ENCODE measurements at regions of chr19 and their contacts with region 1.

Region 1: DNA sequence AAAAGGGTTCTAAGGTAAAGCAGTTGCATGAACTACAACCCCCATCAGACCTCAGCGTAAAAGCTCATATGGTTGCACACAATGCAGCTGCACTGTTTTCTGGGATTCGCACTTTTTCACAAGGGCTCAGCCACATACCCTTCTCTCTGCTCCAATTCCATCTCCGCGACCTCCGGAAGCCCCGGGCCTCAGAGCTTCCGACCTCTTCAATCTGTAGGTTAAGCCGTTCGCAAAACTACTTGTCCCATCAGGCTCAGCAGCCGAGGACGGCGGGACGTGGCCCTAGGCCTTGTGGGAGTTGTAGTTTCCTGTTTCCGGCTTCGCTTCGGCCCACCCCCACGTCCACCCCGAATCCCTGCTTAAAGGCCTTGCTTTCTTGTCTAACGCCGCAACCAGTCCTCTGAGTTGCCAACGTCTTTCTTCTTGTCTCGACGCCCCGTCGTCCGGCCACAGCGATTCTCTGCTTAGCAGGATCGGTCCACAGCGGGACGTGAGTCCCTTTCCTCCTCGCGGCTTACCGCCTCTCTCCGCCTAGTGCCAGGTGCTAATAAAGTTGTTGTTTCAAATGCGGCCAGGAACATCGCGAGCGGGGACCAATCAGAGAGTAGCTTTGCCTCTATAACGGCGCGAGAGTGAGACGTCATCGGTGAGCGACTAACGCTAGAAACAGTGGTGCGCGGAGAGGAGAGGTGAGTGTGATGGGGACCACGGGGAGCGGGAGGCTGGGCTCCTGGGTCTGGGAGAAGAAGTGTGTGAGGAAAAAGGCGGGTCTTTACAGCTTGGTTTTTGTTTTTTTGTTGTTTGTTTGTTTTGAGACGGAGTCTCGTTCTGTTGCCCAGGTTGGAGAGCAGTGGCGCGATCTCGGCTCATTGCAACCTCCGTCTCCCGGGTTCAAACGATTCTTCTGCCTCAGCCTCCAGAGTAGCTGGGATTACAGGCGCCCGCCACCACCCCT is at the starts of genes PRPF31 and TFPT:
- DNase-seq: peak; percentile 80 to 98 (median 97)
- ATAC-seq: peak; percentile 92
- H3K4me3 ChIP-seq: peak within 1 kb of the TSS; percentile 94
- H3K4me3 Mint-ChIP-seq: peak within 1 kb of the TSS; percentile 86 to 96 (median 94)
- H3K27ac ChIP-seq: peak within 1 kb of the TSS; percentile 88
- H3K27ac Mint-ChIP-seq: peak within 1 kb of the TSS; percentile 88 to 97 (median 94)
- H3K4me1 ChIP-seq: peaks cover 11 to 20% of the 10 kb centered on the region in 2 donors
- H3K4me1 Mint-ChIP-seq: peaks cover 23 to 48% (median 42%) of the 10 kb centered on the region in 7 donors
- H3K27me3 ChIP-seq: no peaks in the 10 kb centered on the region
- H3K27me3 Mint-ChIP-seq: peaks cover 0 to 2% (median 0%) of the 10 kb centered on the region in 5 donors
- total RNA-seq, gene PRPF31: 51.8 to 82.1 (median 71.0) TPM
- total RNA-seq, gene TFPT: 13.4 to 46.5 (median 14.6) TPM

Region 2: GRCh38 chr19:53958168-53958571 is 157.2 kb before region 1 on chr19:
- CTCF ChIA-PET with region 1: no interaction called
- POLR2A ChIA-PET with region 1: no interaction called
- intact Hi-C with region 1: no loop called
- DNase-seq: no peak
- ATAC-seq: no peak
- H3K4me3 ChIP-seq: no peak overlapping the region
- H3K4me3 Mint-ChIP-seq: peak overlapping the region in 1 of 10 donors; percentile 13
- H3K27ac ChIP-seq: no peak overlapping the region
- H3K27ac Mint-ChIP-seq: no peak overlapping the region
- H3K4me1 ChIP-seq: no peaks in the 10 kb centered on the region
- H3K4me1 Mint-ChIP-seq: peaks cover 0 to 15% (median 9%) of the 10 kb centered on the region in 7 donors
- H3K27me3 ChIP-seq: peaks cover 0 to 10% of the 10 kb centered on the region in 2 donors
- H3K27me3 Mint-ChIP-seq: peaks cover 55 to 83% (median 65%) of the 10 kb centered on the region in 5 donors

Region 3: DNA sequence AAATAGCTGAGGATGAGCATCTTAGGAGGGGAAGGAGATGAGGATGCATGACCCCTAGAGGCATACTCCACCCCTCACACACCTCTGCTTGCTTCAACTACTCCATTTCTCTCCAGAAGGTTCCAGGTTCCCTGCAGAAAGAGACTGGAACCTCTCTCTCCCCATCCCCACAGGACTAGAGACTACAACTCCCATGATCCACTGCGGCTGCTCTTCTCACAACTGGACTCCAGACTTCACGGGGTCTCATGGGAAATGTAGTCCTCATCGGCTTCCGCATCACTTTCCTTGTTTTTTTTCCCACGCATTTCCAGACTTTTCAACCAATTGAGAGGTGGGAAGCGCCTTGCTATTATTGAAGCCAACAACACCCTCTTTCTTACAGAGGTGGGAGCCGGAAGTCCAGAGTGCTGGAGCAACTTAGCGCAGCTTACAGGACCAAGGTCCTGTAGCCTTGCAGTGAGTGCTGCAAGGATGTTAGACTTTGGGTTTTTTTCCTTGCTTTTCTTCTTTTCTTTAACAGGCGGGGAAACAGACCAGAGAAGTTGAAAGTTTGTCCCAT is 137.9 kb before region 1 on chr19:
- CTCF ChIA-PET with region 1: no interaction called
- POLR2A ChIA-PET with region 1: no interaction called
- intact Hi-C with region 1: loop called (anchors 1 to 5 kb)
- DNase-seq: peak; percentile 34 to 69 (median 59)
- ATAC-seq: peak; percentile 83
- H3K4me3 ChIP-seq: peak overlapping the region; percentile 42
- H3K4me3 Mint-ChIP-seq: peak overlapping the region; percentile 73 to 90 (median 83)
- H3K27ac ChIP-seq: no peak overlapping the region
- H3K27ac Mint-ChIP-seq: peak overlapping the region in 2 of 9 donors; percentile 21 to 50
- H3K4me1 ChIP-seq: peaks cover 0 to 5% of the 10 kb centered on the region in 2 donors
- H3K4me1 Mint-ChIP-seq: peaks cover 14 to 41% (median 30%) of the 10 kb centered on the region in 7 donors
- H3K27me3 ChIP-seq: peaks cover 6 to 16% of the 10 kb centered on the region in 2 donors
- H3K27me3 Mint-ChIP-seq: peaks cover 48 to 70% (median 61%) of the 10 kb centered on the region in 5 donors

Region 4: GRCh38 chr19:54102421-54103169 is 12.8 kb before region 1 on chr19 and contains the start of gene NDUFA3:
- CTCF ChIA-PET with region 1: interaction called, 3 read pairs
- POLR2A ChIA-PET with region 1: interaction called, 41 read pairs
- intact Hi-C with region 1: loop called (anchors 1 kb)
- DNase-seq: peak; percentile 95 to 99 (median 97)
- ATAC-seq: peak; percentile 99
- H3K4me3 ChIP-seq: peak within 1 kb of the TSS; percentile 72
- H3K4me3 Mint-ChIP-seq: peak within 1 kb of the TSS; percentile 87 to 99 (median 98)
- H3K27ac ChIP-seq: peak within 1 kb of the TSS; percentile 77
- H3K27ac Mint-ChIP-seq: peak within 1 kb of the TSS; percentile 85 to 98 (median 94)
- H3K4me1 ChIP-seq: peaks cover 0 to 6% of the 10 kb centered on the region in 2 donors
- H3K4me1 Mint-ChIP-seq: peaks cover 5 to 40% (median 24%) of the 10 kb centered on the region in 7 donors
- H3K27me3 ChIP-seq: no peaks in the 10 kb centered on the region
- H3K27me3 Mint-ChIP-seq: peaks cover 0 to 6% (median 0%) of the 10 kb centered on the region in 5 donors
- total RNA-seq, gene NDUFA3: 64.4 to 127 (median 117) TPM

Region 5: DNA sequence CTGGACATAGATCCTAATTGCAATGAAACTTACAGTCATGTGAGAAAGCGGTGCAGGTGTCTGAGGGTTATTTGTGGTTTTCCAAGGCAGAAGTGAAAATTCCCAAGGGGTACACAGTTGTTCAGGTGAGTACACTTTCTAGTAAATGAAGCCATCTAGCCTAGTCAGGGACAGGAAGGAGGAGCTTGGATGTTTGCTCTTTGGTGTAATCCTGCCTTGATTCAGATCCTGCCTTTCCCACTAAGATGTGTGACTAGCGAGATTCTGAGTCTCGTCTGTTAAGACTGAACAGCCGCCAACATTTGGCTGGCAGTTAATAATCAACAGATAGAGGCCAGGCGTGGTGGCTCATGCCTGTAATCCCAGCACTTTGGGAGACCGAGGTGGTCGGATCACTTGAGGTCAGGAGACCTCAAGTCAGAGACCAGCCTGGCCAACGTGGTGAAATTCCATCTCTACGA is 87.8 kb after region 1 on chr19:
- CTCF ChIA-PET with region 1: no interaction called
- POLR2A ChIA-PET with region 1: interaction called, 10 read pairs
- intact Hi-C with region 1: loop called in 1 of 2 experiments (anchors 1 kb)
- DNase-seq: no peak
- ATAC-seq: no peak
- H3K4me3 ChIP-seq: no peak overlapping the region
- H3K4me3 Mint-ChIP-seq: peak overlapping the region in 9 of 10 donors; percentile 25 to 99 (median 98)
- H3K27ac ChIP-seq: peak overlapping the region; percentile 46
- H3K27ac Mint-ChIP-seq: peak overlapping the region in 3 of 9 donors; percentile 16 to 46 (median 38)
- H3K4me1 ChIP-seq: peaks cover 45 to 53% of the 10 kb centered on the region in 2 donors
- H3K4me1 Mint-ChIP-seq: peaks cover 30 to 86% (median 78%) of the 10 kb centered on the region in 7 donors
- H3K27me3 ChIP-seq: no peaks in the 10 kb centered on the region
- H3K27me3 Mint-ChIP-seq: peaks cover 0 to 4% (median 0%) of the 10 kb centered on the region in 5 donors

Region 6: GRCh38 chr19:54373781-54374631 is 258.6 kb after region 1 on chr19:
- CTCF ChIA-PET with region 1: no interaction called
- POLR2A ChIA-PET with region 1: no interaction called
- intact Hi-C with region 1: no loop called
- DNase-seq: no peak
- ATAC-seq: peak; percentile 56
- H3K4me3 ChIP-seq: no peak overlapping the region
- H3K4me3 Mint-ChIP-seq: peak overlapping the region; percentile 40 to 95 (median 88)
- H3K27ac ChIP-seq: no peak overlapping the region
- H3K27ac Mint-ChIP-seq: peak overlapping the region in 6 of 9 donors; percentile 14 to 79 (median 46)
- H3K4me1 ChIP-seq: peaks cover 50 to 67% of the 10 kb centered on the region in 2 donors
- H3K4me1 Mint-ChIP-seq: peaks cover 54 to 89% (median 79%) of the 10 kb centered on the region in 7 donors
- H3K27me3 ChIP-seq: no peaks in the 10 kb centered on the region
- H3K27me3 Mint-ChIP-seq: peaks cover 0 to 41% (median 0%) of the 10 kb centered on the region in 5 donors

Region 7: GRCh38 chr19:54463531-54464043 is 348.2 kb after region 1 on chr19 and contains the start of gene LENG9:
- CTCF ChIA-PET with region 1: no interaction called
- POLR2A ChIA-PET with region 1: no interaction called
- intact Hi-C with region 1: loop called in 1 of 2 experiments (anchors 5 kb)
- DNase-seq: peak; percentile 73 to 97 (median 87)
- ATAC-seq: peak; percentile 81
- H3K4me3 ChIP-seq: peak within 1 kb of the TSS; percentile 88
- H3K4me3 Mint-ChIP-seq: peak within 1 kb of the TSS; percentile 84 to 95 (median 92)
- H3K27ac ChIP-seq: peak within 1 kb of the TSS; percentile 71
- H3K27ac Mint-ChIP-seq: peak within 1 kb of the TSS; percentile 86 to 98 (median 93)
- H3K4me1 ChIP-seq: peaks cover 17 to 23% of the 10 kb centered on the region in 2 donors
- H3K4me1 Mint-ChIP-seq: peaks cover 16 to 35% (median 33%) of the 10 kb centered on the region in 7 donors
- H3K27me3 ChIP-seq: peaks cover 0 to 3% of the 10 kb centered on the region in 2 donors
- H3K27me3 Mint-ChIP-seq: peaks cover 5 to 23% (median 7%) of the 10 kb centered on the region in 5 donors
- total RNA-seq, gene LENG9: 3.5 to 6.1 (median 4.3) TPM

Measured in naive thymus-derived CD4-positive, alpha-beta T cell (primary cell).